Left ventricle myocardium inferior (tissue), 1 donor: ENCODE measurements at regions of chr5 and their contacts with region 1.

Region 1: GRCh38 chr5:55691265-55692105 is 20.6 kb downstream of the SLC38A9 start:
- DNase-seq: no peak
- H3K4me3 ChIP-seq: peak overlapping the region; percentile 42
- H3K27ac ChIP-seq: peak overlapping the region; percentile 52
- H3K4me1 ChIP-seq: peaks cover 31% of the 10 kb centered on the region
- H3K27me3 ChIP-seq: no peaks in the 10 kb centered on the region
- CTCF ChIP-seq: peak; percentile 75

Region 2: DNA sequence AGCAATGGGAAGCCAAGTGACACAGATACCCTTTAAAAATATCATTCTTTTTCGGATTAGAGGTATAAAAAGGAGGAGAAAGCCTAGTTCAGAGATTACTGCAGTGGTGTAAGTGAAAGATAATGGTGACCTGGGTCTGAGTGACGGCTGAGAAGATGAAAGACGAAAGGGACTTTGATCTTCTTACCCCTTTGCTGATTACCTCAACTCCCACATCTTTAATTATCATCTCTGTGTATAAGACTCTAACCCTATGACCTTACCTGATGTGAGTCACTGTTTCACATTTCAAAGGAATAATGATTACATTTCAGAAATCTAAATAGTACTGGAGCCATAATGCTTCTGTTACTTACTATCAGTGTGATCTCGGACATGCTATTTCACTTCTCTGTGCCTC is 436.7 kb before region 1 on chr5:
- intact Hi-C with region 1: no loop called
- DNase-seq: no peak
- H3K4me3 ChIP-seq: no peak overlapping the region
- H3K27ac ChIP-seq: no peak overlapping the region
- H3K4me1 ChIP-seq: no peaks in the 10 kb centered on the region
- H3K27me3 ChIP-seq: no peaks in the 10 kb centered on the region
- CTCF ChIP-seq: no peak

Region 3: GRCh38 chr5:55344392-55344992 is 347.0 kb before region 1 on chr5:
- intact Hi-C with region 1: loop called (anchors 10 kb)
- DNase-seq: peak; percentile 34
- H3K4me3 ChIP-seq: no peak overlapping the region
- H3K27ac ChIP-seq: no peak overlapping the region
- H3K4me1 ChIP-seq: no peaks in the 10 kb centered on the region
- H3K27me3 ChIP-seq: no peaks in the 10 kb centered on the region
- CTCF ChIP-seq: peak; percentile 92

Region 4: GRCh38 chr5:55407059-55407684 is 284.3 kb before region 1 on chr5:
- intact Hi-C with region 1: loop called (anchors 5 kb)
- DNase-seq: no peak
- H3K4me3 ChIP-seq: no peak overlapping the region
- H3K27ac ChIP-seq: no peak overlapping the region
- H3K4me1 ChIP-seq: peaks cover 17% of the 10 kb centered on the region
- H3K27me3 ChIP-seq: no peaks in the 10 kb centered on the region
- CTCF ChIP-seq: peak; percentile 89

Region 5: DNA sequence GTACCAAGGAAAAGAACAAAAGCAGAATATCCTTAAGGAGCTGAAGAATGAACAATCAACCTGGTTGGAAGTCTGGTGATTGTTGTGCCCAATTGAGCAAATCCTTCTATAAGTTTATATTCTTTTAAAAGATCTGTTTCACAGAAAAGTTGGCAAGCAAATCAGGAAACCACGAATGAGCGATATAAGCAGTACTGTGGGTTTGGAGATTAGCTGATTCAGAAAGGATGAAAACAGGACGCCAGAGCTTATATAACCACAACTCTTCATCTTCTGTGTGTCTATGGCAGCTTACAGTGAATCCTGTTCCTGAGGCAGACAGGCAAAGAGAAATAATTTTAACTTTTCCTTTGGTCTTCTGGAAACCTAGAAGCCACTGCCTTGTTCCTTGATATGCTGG is 41.1 kb before region 1 on chr5:
- intact Hi-C with region 1: no loop called
- DNase-seq: no peak
- H3K4me3 ChIP-seq: no peak overlapping the region
- H3K27ac ChIP-seq: no peak overlapping the region
- H3K4me1 ChIP-seq: no peaks in the 10 kb centered on the region
- H3K27me3 ChIP-seq: no peaks in the 10 kb centered on the region
- CTCF ChIP-seq: no peak

Region 6: DNA sequence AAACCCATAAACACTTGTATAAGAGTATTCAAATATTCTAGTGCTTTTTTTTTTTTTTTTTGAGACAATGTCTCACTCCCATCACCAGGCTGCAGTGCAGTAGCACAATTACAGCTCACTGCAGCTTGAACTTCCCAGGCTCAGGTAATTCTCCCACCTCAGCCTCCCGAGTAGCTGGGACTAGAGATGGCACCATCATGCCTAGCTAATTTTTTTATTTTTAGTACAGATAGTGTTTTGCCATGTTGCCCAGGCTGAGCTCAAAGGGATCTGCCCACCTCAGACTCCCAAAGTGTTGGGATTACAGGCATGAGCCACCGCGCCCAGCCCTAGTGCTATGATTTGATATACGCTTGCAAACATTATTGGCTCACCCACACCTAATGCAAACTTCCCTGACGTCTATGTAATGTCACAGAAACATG is 291.5 kb after region 1 on chr5:
- intact Hi-C with region 1: no loop called
- DNase-seq: no peak
- H3K4me3 ChIP-seq: no peak overlapping the region
- H3K27ac ChIP-seq: no peak overlapping the region
- H3K4me1 ChIP-seq: peaks cover 78% of the 10 kb centered on the region
- H3K27me3 ChIP-seq: no peaks in the 10 kb centered on the region
- CTCF ChIP-seq: peak; percentile 31